ENCODE measurements at regions of chr11 and their contacts with region 1.

Region 1: DNA sequence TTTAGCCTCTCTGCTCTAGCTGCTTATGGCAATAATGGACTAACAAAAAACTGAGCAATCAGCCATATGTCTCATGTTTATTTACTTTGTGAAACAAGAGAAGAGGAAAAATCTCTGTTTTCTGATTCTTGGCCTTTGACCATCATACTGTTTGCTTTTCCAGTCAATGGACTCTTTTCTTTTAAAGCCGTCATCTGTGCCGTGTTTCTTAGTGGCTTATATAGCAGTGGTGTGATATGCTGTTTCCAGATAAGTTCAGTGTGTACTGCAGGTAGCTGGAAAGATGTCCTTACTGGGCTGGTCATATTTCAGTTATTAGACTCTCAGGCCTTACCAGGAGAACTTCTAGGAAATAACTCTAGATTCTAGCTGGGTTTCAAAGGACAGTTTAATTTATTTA is 33.6 kb upstream of the TECTA start:
- DNase-seq: peak; percentile 95
- ATAC-seq: peak; percentile 97
- H3K4me3 ChIP-seq: peak overlapping the region; percentile 10; the same call in 1 of the 2 replicates
- H3K27ac ChIP-seq: peak overlapping the region; percentile 84
- H3K4me1 ChIP-seq: peaks cover 22% of the 10 kb centered on the region
- H3K27me3 ChIP-seq: no peaks in the 10 kb centered on the region
- CTCF ChIP-seq: no peak

Region 2: DNA sequence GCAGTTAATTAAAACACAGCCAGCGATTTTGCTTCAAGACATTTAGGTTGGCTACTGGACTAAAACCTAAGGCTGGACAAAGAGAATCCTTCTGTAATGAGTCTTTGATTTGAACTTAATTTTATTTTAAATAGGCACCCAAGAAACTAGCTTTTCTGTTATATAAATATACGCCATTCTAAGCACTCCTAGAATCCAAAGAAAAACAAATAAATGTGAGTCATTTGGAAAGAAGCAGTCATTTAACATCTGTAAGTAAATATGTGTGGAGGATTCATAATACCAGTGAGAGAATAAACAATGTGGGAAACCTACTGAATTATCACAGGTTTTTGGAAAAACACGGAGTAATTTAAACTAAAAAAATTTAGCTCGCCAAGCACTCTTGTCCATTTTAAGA is 32.4 kb after region 1 on chr11:
- CTCF ChIA-PET with region 1: no interaction called
- POLR2A ChIA-PET with region 1: no interaction called
- intact Hi-C with region 1: loop called (anchors 1 kb)
- DNase-seq: peak; percentile 68
- ATAC-seq: peak; percentile 99
- H3K4me3 ChIP-seq: no peak overlapping the region
- H3K27ac ChIP-seq: no peak overlapping the region
- H3K4me1 ChIP-seq: peaks cover 12% of the 10 kb centered on the region
- H3K27me3 ChIP-seq: peaks cover 27% of the 10 kb centered on the region
- CTCF ChIP-seq: no peak

Measured in PC-3 (cell line).